T-cell (primary cell): ENCODE measurements at regions of chr6 and their contacts with region 1.

Region 1: DNA sequence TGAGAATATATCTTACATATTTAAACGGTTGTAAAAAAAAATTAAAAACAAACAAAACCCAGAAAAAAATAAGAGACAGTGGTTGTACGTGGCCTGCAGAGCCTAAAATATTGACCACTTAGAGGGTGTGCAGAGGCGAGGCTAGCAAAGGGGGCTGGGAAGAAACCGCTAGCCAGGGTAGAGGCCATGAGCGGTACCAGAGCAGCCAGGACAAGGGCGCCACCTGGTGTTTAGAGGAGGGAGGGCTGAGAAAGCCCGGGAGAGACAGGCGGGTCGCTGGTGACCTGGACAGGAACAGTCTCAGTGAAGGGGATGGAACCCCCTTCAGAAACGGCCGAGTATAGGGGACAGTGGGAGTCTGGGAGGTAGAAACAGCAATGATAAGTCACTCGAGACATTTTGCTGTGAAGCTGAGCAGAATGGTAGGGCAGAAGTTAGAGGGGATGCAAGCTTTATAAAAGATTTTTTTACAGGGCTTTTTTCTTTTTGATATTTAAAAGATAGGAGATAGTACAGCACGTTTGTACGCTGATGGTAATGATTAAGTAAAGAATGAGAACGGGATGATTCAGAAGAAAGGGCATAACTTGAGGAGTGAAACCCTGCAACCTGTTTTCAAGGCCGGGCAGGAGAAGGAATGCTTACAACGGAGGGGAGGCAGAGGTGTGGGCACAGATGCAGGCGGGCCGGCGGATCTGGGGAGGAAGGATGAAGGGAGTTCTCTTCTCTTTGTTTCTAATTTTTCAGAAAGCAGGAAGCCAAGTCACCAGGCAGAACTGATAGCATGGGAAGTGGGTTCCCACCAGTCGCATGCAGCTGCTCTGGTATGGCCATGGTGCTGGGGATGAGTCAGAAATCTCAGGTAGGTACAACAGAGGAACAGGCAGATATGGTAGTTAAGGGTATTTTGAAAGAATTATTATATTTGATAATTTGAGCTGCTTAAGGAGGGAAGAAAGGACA is 76.2 kb downstream of the FAM229B start:
- DNase-seq: peak; percentile 42 to 82 (median 68)
- ATAC-seq: peak; percentile 91 to 98 (median 96)
- H3K4me3 ChIP-seq: peak overlapping the region in 1 of 2 donors; percentile 5
- H3K4me3 Mint-ChIP-seq: peak overlapping the region; percentile 34 to 56 (median 55)
- H3K27ac ChIP-seq: no peak overlapping the region
- H3K27ac Mint-ChIP-seq: peak overlapping the region; percentile 19 to 54
- H3K4me1 ChIP-seq: peaks cover 2 to 8% of the 10 kb centered on the region in 2 experiments
- H3K4me1 Mint-ChIP-seq: peaks cover 14 to 15% (median 14%) of the 10 kb centered on the region in 3 donors
- H3K27me3 ChIP-seq: peaks cover 0 to 10% of the 10 kb centered on the region in 2 experiments
- H3K27me3 Mint-ChIP-seq: peaks cover 44 to 51% of the 10 kb centered on the region in 2 donors

Region 2: GRCh38 chr6:112087136-112087911 is 76.3 kb before region 1 on chr6 and contains the starts of genes FAM229B and TUBE1:
- CTCF ChIA-PET with region 1: interaction called, 15 to 16 read pairs
- POLR2A ChIA-PET with region 1: no interaction called
- DNase-seq: peak; percentile 69 to 96 (median 90)
- ATAC-seq: peak; percentile 95 to 97 (median 96)
- H3K4me3 ChIP-seq: peak within 1 kb of the TSS; percentile 83 to 88
- H3K4me3 Mint-ChIP-seq: no peak within 1 kb of the TSS
- H3K27ac ChIP-seq: peak within 1 kb of the TSS; percentile 89
- H3K27ac Mint-ChIP-seq: no peak within 1 kb of the TSS
- H3K4me1 ChIP-seq: peaks cover 0 to 9% of the 10 kb centered on the region in 2 experiments
- H3K4me1 Mint-ChIP-seq: peaks cover 9 to 12% (median 10%) of the 10 kb centered on the region in 3 donors
- H3K27me3 ChIP-seq: peaks cover 0 to 5% of the 10 kb centered on the region in 2 experiments
- H3K27me3 Mint-ChIP-seq: peaks cover 11 to 19% of the 10 kb centered on the region in 2 donors
- total RNA-seq, gene FAM229B: 1.2 to 3.7 (median 3.5) TPM
- total RNA-seq, gene TUBE1: 26.8 to 40.9 (median 33.6) TPM

Region 3: DNA sequence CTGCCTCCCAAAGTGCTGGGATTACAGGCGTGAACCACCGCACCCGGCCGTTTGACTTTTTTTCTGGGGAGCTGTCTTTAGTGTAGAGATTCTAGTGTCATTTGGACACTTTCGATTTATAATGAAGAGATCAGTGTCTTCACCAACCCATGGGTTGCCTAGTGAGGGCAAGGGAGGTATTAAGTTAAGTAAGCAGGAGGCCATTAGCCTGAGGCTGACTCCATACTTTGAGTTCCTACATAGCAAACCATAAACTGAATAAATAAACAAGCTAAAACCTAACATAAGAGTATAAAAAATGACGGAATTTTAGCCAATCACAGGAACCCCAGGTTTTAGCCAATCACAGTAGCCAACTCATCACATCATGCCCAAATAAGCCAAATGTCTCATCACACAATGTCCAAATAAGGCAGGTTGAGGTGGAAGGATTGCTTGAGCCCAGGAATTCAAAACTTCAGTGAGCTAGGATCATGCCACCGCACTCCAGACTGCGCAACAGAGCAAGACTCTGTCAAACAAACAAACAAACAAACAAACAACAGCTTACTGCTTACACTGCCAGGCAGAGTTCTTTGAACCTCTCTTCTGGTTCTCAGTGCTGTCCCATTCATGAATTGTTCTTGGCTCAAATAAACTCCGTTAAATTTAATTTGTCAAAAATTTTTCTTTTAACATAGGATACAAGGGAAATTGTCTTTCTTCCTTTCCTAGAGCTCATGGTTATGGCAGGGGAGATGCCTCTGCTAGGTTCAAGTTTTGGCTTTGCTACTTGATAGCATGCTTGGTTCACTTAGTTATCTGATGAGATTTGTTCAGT is 153.7 kb after region 1 on chr6:
- CTCF ChIA-PET with region 1: no interaction called
- POLR2A ChIA-PET with region 1: interaction called in 1 of 2 experiments, 19 read pairs
- DNase-seq: no peak
- ATAC-seq: no peak
- H3K4me3 ChIP-seq: no peak overlapping the region
- H3K4me3 Mint-ChIP-seq: no peak overlapping the region
- H3K27ac ChIP-seq: no peak overlapping the region
- H3K27ac Mint-ChIP-seq: no peak overlapping the region
- H3K4me1 ChIP-seq: no peaks in the 10 kb centered on the region
- H3K4me1 Mint-ChIP-seq: no peaks in the 10 kb centered on the region
- H3K27me3 ChIP-seq: no peaks in the 10 kb centered on the region
- H3K27me3 Mint-ChIP-seq: peaks cover 4 to 6% of the 10 kb centered on the region in 2 donors

Region 4: GRCh38 chr6:112343390-112343789 is 179.8 kb after region 1 on chr6:
- CTCF ChIA-PET with region 1: no interaction called
- POLR2A ChIA-PET with region 1: no interaction called
- DNase-seq: no peak
- ATAC-seq: no peak
- H3K4me3 ChIP-seq: no peak overlapping the region
- H3K4me3 Mint-ChIP-seq: no peak overlapping the region
- H3K27ac ChIP-seq: no peak overlapping the region
- H3K27ac Mint-ChIP-seq: no peak overlapping the region
- H3K4me1 ChIP-seq: no peaks in the 10 kb centered on the region
- H3K4me1 Mint-ChIP-seq: no peaks in the 10 kb centered on the region
- H3K27me3 ChIP-seq: no peaks in the 10 kb centered on the region
- H3K27me3 Mint-ChIP-seq: peaks cover 18 to 19% of the 10 kb centered on the region in 2 donors